ENCODE measurements at regions of chr12 and their contacts with region 1.

Region 1: GRCh38 chr12:49623142-49623904 is at the start of gene PRPF40B:
- DNase-seq: peak; percentile 84
- H3K4me3 ChIP-seq: peak within 1 kb of the TSS; percentile 44 to 48
- H3K27ac ChIP-seq: peak within 1 kb of the TSS; percentile 82 to 84
- H3K4me1 ChIP-seq: peaks cover 11% of the 10 kb centered on the region
- H3K27me3 ChIP-seq: no peaks in the 10 kb centered on the region
- CTCF ChIP-seq: peak in 3 of 4 experiments; percentile 27 to 48 (median 46)
- POLR2A ChIP-seq: peak; percentile 79
- total RNA-seq, gene PRPF40B: 13.9 to 31.1 TPM

Region 2: DNA sequence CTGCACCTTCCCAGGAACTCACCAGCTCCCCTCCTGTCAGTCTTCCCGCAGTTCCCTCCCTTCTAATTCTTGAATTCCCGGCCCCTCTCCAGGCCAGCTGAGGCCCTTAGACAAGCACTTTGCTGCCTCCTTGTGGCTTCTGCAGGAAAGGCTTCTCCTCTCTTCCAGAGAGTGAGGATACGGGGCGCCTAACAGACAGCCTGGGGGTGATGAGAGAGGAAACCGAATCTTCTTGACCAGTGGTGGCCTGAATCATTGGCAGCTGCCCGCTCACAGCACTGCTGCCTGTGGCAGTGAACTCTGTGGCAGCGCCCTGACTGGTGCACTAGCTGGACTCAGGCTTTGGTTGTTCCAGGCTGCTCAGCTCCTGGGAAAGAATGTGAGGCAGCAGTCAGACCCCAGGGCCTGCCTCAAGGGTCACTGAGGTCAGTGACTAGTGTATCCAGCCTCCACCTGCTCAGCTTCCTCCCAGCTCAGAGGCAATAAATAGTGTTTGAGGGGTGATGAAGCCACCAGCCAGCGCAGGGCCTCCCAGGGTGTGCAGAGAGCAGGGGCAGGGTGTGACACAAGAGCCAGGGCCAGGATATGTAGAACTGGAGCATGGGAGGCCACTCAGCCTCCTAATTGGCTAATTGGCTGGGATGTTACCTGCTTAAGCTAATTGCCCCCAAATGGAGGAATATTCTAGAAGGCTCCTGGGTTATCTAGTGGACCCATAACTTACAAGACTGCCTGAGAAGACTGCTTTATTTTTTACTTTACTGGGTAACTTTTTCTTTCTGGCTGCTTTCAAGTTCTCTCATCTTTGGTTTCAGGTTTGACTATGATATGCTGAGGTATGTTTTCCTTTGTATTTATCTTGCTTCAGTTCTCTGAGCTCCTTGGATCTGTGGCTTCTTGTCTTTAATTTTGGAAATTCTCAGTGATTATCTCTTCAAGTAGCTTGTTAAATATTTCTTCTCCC is 42.5 kb before region 1 on chr12:
- intact Hi-C with region 1: loop called (anchors 5 kb)
- DNase-seq: peak; percentile 52
- H3K4me3 ChIP-seq: no peak overlapping the region
- H3K27ac ChIP-seq: no peak overlapping the region
- H3K4me1 ChIP-seq: no peaks in the 10 kb centered on the region
- H3K27me3 ChIP-seq: no peaks in the 10 kb centered on the region
- CTCF ChIP-seq: peak in 3 of 4 experiments; percentile 51 to 70 (median 67)
- POLR2A ChIP-seq: no peak

Measured in prostate gland (tissue), 2 donors.